IMR-90 (cell line): ENCODE measurements at regions of chr1 and their contacts with region 1.

Region 1: DNA sequence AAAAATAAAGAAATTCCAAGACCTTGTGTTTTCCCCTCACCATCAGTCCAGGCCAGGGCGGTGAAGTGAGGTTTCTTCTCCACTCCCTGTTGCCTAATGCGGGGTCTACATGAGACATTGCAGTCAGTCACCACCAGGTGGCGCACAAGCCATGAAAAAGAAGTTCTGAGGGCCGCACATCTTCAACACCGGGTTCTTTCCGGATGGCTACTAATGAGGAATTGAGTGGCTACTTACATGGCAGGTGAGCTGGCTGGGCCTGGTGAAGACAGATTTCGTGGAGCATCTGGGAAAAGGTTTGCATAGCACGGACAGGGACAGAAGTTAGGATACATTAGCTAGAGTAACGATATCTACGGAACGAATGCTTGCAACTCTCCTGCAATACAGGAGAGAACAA is 15.8 kb upstream of the S100A11 start:
- DNase-seq: peak; percentile 71
- ATAC-seq: peak; percentile 25
- H3K4me3 ChIP-seq: no peak overlapping the region
- H3K27ac ChIP-seq: no peak overlapping the region
- H3K4me1 ChIP-seq: peaks cover 5% of the 10 kb centered on the region
- H3K27me3 ChIP-seq: peaks cover 14% of the 10 kb centered on the region
- CTCF ChIP-seq: peak; percentile 87
- POLR2A ChIP-seq: no peak
- RAD21 ChIP-seq: peak; percentile 78

Region 2: DNA sequence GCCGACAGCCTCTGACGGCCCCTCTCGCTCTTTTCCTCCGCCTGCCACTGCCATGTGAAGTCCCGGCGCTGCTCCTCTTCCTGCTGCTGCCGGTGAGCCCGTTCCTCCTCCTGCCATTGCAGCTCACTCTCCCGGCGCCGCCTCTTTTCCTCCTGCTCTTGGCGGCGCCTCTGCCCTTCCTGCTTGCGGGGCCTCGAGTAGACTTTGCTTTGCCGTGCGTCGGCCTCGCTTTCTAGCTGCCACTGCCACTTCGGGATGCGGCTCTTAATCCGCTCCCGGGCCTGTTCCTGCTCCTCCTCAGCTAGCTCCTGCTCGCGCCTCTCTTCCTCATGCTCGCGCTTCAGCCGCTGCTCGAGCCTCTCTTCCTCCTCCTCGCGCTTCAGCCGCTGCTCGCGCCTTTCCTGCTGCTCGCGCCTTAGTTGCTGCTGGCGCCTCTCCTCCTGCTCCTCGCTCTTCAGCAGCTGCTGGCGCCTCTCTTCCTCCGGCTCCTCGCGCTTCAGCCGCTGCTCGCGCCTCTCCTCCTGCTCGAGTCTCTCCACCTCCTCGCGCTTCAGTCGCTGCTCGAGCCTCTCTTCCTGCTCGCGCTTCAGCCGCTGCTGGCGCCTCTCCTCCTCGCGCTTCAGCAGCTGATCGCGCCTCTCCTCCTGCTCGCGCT is 58.4 kb after region 1 on chr1:
- CTCF ChIA-PET with region 1: interaction called, 3 read pairs
- POLR2A ChIA-PET with region 1: no interaction called
- dilution Hi-C with region 1: no loop called
- in situ Hi-C with region 1: no loop called
- intact Hi-C with region 1: loop called (anchors 5 kb)
- DNase-seq: peak; percentile 36
- ATAC-seq: peak; percentile 59
- H3K4me3 ChIP-seq: peak overlapping the region; percentile 29
- H3K27ac ChIP-seq: no peak overlapping the region
- H3K4me1 ChIP-seq: peaks cover 3% of the 10 kb centered on the region; the same call in 1 of the 2 replicates
- H3K27me3 ChIP-seq: peaks cover 64% of the 10 kb centered on the region
- CTCF ChIP-seq: no peak
- POLR2A ChIP-seq: no peak
- RAD21 ChIP-seq: no peak

Region 3: DNA sequence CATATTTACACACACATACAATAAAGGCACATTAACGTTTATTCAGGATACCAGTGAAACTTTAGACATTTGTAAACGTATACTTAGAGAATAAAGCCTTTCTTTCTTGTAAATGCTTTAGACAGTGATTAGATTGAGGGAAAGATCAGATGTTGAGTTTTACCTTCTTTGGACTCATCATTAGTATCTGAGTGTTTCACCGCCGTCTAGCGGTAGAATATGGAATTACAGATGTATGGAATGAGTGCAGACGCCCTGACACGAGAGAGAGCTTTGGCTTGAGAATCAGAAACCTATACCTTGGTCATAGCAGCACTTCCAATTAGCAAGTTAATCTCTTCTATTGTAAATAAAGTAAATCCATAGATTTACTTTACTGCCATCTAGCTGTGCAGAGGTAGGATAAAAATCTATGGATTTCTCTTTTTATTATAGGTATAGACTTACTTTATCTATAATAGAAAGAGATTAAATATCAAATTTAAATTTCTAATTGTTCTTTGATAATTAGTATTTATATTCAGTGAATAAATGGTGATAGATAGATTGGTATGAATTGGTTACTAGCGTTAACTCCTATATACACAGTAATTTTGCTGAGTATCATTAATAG is 294.6 kb after region 1 on chr1:
- CTCF ChIA-PET with region 1: no interaction called
- POLR2A ChIA-PET with region 1: no interaction called
- dilution Hi-C with region 1: no loop called
- in situ Hi-C with region 1: no loop called
- intact Hi-C with region 1: loop called (anchors 1 kb)
- DNase-seq: peak; percentile 52
- ATAC-seq: peak; percentile 75; the same call in 1 of the 2 replicates
- H3K4me3 ChIP-seq: no peak overlapping the region
- H3K27ac ChIP-seq: no peak overlapping the region
- H3K4me1 ChIP-seq: no peaks in the 10 kb centered on the region
- H3K27me3 ChIP-seq: no peaks in the 10 kb centered on the region
- CTCF ChIP-seq: peak; percentile 62
- POLR2A ChIP-seq: no peak
- RAD21 ChIP-seq: peak; percentile 31

Region 4: DNA sequence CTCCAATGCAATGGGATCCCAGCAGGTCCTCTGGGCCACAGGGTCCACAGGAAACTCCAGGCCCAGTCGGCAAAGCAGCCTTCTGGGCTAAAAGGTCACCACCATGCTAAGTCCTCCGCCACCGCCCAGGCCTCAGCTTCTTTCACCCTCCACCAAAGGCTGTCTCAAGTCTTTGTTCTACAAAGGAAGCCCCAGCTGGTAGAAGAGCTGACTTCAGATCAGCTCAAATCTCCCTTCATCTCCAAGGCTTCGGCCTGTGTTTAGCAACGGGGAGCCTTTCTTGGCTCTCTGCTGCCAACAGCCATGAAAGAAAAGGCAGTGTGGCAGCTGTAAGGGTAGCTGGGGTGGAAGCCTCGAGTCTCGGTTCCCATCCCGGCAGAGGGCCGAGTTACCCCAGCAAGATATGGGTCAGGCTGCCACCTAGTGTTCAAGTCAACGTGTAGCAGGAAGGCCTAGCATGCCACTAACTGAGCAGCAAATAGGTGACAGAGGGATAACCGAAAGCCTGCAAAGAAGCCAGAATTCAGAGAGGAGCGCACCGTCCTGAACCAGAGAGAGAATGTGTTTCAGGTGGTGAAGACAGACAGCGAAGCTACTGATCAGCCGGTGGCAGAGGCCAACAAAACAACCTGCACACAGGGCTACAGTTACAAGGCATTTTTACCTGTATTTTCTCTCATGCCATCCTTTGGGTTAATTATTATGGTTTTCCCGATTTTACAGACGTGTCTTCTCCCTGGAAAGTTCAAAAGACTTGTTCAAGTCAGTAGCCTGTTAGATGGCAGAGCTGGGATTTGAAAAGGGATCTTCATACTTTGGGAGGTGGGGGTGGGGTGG is 388.2 kb after region 1 on chr1:
- CTCF ChIA-PET with region 1: no interaction called
- POLR2A ChIA-PET with region 1: no interaction called
- dilution Hi-C with region 1: no loop called
- in situ Hi-C with region 1: loop called (anchors 10 kb)
- intact Hi-C with region 1: loop called (anchors 5 kb)
- DNase-seq: peak; percentile 54
- ATAC-seq: peak; percentile 99
- H3K4me3 ChIP-seq: no peak overlapping the region
- H3K27ac ChIP-seq: no peak overlapping the region
- H3K4me1 ChIP-seq: no peaks in the 10 kb centered on the region
- H3K27me3 ChIP-seq: no peaks in the 10 kb centered on the region
- CTCF ChIP-seq: peak; percentile 78
- POLR2A ChIP-seq: no peak
- RAD21 ChIP-seq: peak; percentile 65

Region 5: GRCh38 chr1:152459596-152460528 is 407.3 kb after region 1 on chr1:
- CTCF ChIA-PET with region 1: interaction called, 5 read pairs
- POLR2A ChIA-PET with region 1: no interaction called
- dilution Hi-C with region 1: no loop called
- in situ Hi-C with region 1: no loop called
- intact Hi-C with region 1: loop called (anchors 2 kb)
- DNase-seq: peak; percentile 52
- ATAC-seq: peak; percentile 76
- H3K4me3 ChIP-seq: no peak overlapping the region
- H3K27ac ChIP-seq: no peak overlapping the region
- H3K4me1 ChIP-seq: no peaks in the 10 kb centered on the region
- H3K27me3 ChIP-seq: no peaks in the 10 kb centered on the region
- CTCF ChIP-seq: peak; percentile 70
- POLR2A ChIP-seq: no peak
- RAD21 ChIP-seq: peak; percentile 19; the same call in 1 of the 2 replicates

Region 6: GRCh38 chr1:153375511-153375910 is 1322.9 kb after region 1 on chr1 and contains the start of gene S100A12:
- CTCF ChIA-PET with region 1: no interaction called
- POLR2A ChIA-PET with region 1: no interaction called
- dilution Hi-C with region 1: no loop called
- in situ Hi-C with region 1: no loop called
- intact Hi-C with region 1: no loop called
- DNase-seq: peak; percentile 70
- ATAC-seq: peak; percentile 54
- H3K4me3 ChIP-seq: no peak within 1 kb of the TSS
- H3K27ac ChIP-seq: no peak within 1 kb of the TSS
- H3K4me1 ChIP-seq: no peaks in the 10 kb centered on the region
- H3K27me3 ChIP-seq: peaks cover 2% of the 10 kb centered on the region; the same call in 1 of the 2 replicates
- CTCF ChIP-seq: no peak
- POLR2A ChIP-seq: no peak
- RAD21 ChIP-seq: no peak
- total RNA-seq, gene S100A12: not detected in 2 replicates